ENCODE measurements at regions of chr22 and their contacts with region 1.

Region 1: DNA sequence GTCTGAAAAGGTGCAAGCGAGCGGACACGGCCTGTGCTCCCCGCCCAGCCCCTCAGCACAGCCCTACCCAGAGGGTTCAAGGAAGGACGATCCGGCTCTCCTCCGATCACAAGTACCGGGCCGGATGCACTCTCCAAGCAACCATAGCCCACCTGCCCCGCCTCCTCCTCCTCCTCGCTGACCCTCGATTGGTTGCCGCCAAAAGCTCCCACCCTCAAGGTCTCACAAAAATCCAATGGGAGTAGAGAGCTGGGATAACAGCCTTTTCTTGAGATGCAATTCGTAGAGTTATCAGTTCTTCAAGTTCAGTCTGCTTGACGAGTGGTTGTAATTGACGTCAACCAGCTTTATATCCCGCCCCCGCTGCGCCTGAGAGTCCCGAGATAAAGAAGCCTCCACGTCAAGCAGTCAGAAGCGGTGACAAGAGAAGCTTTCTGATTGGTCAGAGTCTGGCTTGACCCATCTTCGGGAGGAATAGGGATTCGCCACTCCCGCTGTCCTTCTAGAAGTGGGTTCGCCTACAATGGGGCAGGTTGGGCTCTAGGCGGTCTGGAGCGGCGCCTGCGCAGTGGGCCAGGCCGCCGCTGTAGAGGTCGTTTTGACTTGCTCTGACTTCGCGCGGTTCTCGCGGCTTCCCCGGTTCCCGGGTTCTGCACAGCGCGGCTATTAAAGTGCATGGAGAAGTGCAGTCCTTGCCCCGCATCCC is at the start of gene IFT27:
- DNase-seq: peak; percentile 99 to 100
- H3K4me3 ChIP-seq: peak within 1 kb of the TSS; percentile 76
- H3K27ac ChIP-seq: no peak within 1 kb of the TSS
- H3K4me1 ChIP-seq: peaks cover 13% of the 10 kb centered on the region
- H3K27me3 ChIP-seq: no peaks in the 10 kb centered on the region
- CTCF ChIP-seq: no peak
- total RNA-seq, gene IFT27: 74.2 and 84.2 TPM in 2 replicates

Region 2: GRCh38 chr22:36554098-36554497 is 222.0 kb before region 1 on chr22:
- CTCF ChIA-PET with region 1: no interaction called
- POLR2A ChIA-PET with region 1: no interaction called
- intact Hi-C with region 1: no loop called
- DNase-seq: peak in 1 of 2 experiments; percentile 25
- H3K4me3 ChIP-seq: no peak overlapping the region
- H3K27ac ChIP-seq: no peak overlapping the region
- H3K4me1 ChIP-seq: peaks cover 11% of the 10 kb centered on the region; the same call in 1 of the 2 replicates
- H3K27me3 ChIP-seq: peaks cover 20% of the 10 kb centered on the region
- CTCF ChIP-seq: no peak

Region 3: DNA sequence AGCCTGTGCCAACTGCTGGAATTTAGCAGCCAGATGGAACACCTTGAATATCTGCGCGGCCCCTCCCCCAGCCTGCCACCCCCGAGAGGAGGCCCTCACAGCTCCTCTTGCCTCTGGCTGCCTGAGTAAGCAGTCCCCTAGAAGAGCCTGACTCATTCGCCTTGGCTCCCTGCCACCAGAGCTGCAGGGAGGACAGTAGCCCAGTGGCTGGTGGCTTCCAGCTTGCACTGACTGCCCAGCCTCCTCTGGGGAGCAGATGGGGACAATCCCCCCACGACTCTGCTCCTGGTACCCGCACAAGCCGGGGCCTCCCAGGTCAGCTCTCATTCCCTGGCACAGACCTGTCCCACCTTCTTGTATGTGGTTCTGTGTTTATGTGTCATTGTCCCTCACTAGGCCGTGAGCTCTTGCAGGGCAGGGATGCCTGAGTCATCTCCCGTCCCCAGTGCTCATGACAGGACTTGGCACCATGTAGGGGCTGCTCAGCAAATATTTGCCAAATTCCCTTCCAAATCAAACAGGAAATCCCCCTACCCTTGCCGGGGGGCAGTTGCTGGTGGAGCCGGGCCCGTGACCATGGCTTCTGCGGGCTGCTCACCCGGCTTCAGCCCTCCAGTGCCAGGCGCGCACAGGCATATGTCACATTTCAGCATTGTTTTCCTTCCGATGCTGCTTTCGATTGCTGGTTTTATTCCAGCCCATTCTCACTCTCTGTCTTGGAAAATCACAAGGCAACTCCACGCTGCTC is 116.2 kb before region 1 on chr22:
- CTCF ChIA-PET with region 1: no interaction called
- POLR2A ChIA-PET with region 1: interaction called, 11 read pairs
- intact Hi-C with region 1: no loop called
- DNase-seq: peak; percentile 98 to 99
- H3K4me3 ChIP-seq: peak overlapping the region; percentile 48
- H3K27ac ChIP-seq: peak overlapping the region; percentile 79
- H3K4me1 ChIP-seq: peaks cover 28% of the 10 kb centered on the region
- H3K27me3 ChIP-seq: no peaks in the 10 kb centered on the region
- CTCF ChIP-seq: no peak

Region 4: DNA sequence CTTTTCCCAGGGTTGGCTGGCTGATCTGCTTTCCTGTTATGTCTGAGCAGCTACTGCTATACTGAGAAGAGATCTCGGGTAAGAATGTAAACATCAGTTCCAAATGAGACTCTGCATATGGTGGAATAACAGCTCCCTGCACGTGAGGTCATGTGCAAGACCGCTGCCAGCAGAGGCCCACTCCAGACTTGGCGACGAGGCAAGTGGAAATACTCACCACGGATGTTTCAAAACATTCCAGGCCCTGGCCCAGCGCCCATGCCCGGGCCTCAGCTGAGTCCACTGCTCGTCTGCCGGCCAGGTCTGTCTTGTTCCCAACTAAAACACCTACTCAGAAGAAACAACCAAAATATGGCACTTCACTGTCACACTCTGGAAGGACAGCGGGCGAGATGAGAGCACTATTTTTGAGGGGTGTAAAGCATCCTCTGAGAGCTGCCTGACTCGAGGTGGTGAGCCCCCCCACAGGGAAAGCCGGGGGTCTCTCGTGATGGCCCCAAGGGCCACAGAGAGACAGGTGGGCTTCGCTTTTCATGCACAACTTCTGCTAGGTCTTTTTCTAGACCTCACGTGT is 13.3 kb before region 1 on chr22:
- CTCF ChIA-PET with region 1: interaction called, 5 read pairs
- POLR2A ChIA-PET with region 1: interaction called, 13 read pairs
- intact Hi-C with region 1: no loop called
- DNase-seq: no peak
- H3K4me3 ChIP-seq: no peak overlapping the region
- H3K27ac ChIP-seq: no peak overlapping the region
- H3K4me1 ChIP-seq: peaks cover 14% of the 10 kb centered on the region
- H3K27me3 ChIP-seq: no peaks in the 10 kb centered on the region
- CTCF ChIP-seq: no peak